GM12878 (cell line): ENCODE measurements at regions of chr12 and their contacts with region 1.

Region 1: GRCh38 chr12:11758510-11759493 is 109.3 kb downstream of the ETV6 start:
- DNase-seq: peak; percentile 93
- ATAC-seq: peak; percentile 76
- H3K4me3 ChIP-seq: no peak overlapping the region; the same call in 1 of the 2 replicates
- H3K27ac ChIP-seq: peak overlapping the region; percentile 100
- H3K4me1 ChIP-seq: peaks cover 70% of the 10 kb centered on the region
- H3K27me3 ChIP-seq: no peaks in the 10 kb centered on the region
- CTCF ChIP-seq: no peak
- EP300 ChIP-seq: peak; percentile 78 to 91; a peak in 1 of 4 replicates
- POLR2A ChIP-seq: peak; percentile 63
- RAD21 ChIP-seq: peak; percentile 17; the same call in 1 of the 2 replicates

Region 2: DNA sequence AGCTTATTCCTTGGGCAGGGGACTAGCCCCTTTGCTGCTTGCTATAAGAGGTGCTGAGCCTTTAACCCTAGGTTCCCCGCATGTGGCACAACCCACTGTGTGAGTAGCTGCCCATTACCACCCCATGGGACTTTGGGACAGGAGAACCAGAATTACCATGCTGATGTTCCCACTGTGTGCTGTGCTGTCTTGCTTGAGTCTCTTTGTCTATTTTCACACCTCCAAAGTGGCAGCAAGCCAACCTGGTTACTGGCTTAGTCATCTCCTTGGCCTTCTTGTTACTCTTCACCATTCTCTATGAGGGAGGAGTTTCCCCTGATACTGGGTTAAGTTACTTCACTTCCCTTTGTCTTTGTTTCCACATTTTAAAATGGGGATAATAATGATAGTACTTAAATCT is 182.7 kb before region 1 on chr12:
- CTCF ChIA-PET with region 1: interaction called, 4 read pairs
- POLR2A ChIA-PET with region 1: interaction called, 6 read pairs
- RAD21 ChIA-PET with region 1: interaction called, 28 read pairs
- SMC1A ChIA-PET with region 1: interaction called, 70 read pairs
- in situ Hi-C with region 1: loop called (anchors 5 kb)
- intact Hi-C with region 1: no loop called
- DNase-seq: peak; percentile 86
- ATAC-seq: peak; percentile 53
- H3K4me3 ChIP-seq: no peak overlapping the region
- H3K27ac ChIP-seq: peak overlapping the region; percentile 89
- H3K4me1 ChIP-seq: peaks cover 43% of the 10 kb centered on the region
- H3K27me3 ChIP-seq: no peaks in the 10 kb centered on the region
- CTCF ChIP-seq: no peak
- EP300 ChIP-seq: no peak
- POLR2A ChIP-seq: no peak
- RAD21 ChIP-seq: no peak

Region 3: GRCh38 chr12:11719678-11720099 is 39.1 kb before region 1 on chr12:
- CTCF ChIA-PET with region 1: interaction called, 8 read pairs
- POLR2A ChIA-PET with region 1: interaction called, 5 read pairs
- RAD21 ChIA-PET with region 1: interaction called, 497 read pairs
- SMC1A ChIA-PET with region 1: interaction called, 433 read pairs
- in situ Hi-C with region 1: no loop called
- intact Hi-C with region 1: no loop called
- DNase-seq: no peak
- ATAC-seq: peak; percentile 12
- H3K4me3 ChIP-seq: no peak overlapping the region
- H3K27ac ChIP-seq: peak overlapping the region; percentile 83
- H3K4me1 ChIP-seq: peaks cover 78% of the 10 kb centered on the region
- H3K27me3 ChIP-seq: no peaks in the 10 kb centered on the region
- CTCF ChIP-seq: no peak
- EP300 ChIP-seq: no peak
- POLR2A ChIP-seq: peak; percentile 53; the same call in 1 of the 2 replicates
- RAD21 ChIP-seq: no peak

Region 4: GRCh38 chr12:11771356-11771755 is 12.6 kb after region 1 on chr12:
- CTCF ChIA-PET with region 1: interaction called, 14 read pairs
- POLR2A ChIA-PET with region 1: interaction called, 144 read pairs
- RAD21 ChIA-PET with region 1: interaction called, 399 read pairs
- SMC1A ChIA-PET with region 1: interaction called, 1,116 read pairs
- in situ Hi-C with region 1: no loop called
- intact Hi-C with region 1: no loop called
- DNase-seq: no peak
- ATAC-seq: peak; percentile 68
- H3K4me3 ChIP-seq: no peak overlapping the region
- H3K27ac ChIP-seq: peak overlapping the region; percentile 72
- H3K4me1 ChIP-seq: peaks cover 79% of the 10 kb centered on the region
- H3K27me3 ChIP-seq: no peaks in the 10 kb centered on the region
- CTCF ChIP-seq: no peak
- EP300 ChIP-seq: peak in 1 of 2 experiments; percentile 55; a peak in 1 of 4 replicates
- POLR2A ChIP-seq: no peak
- RAD21 ChIP-seq: no peak

Region 5: GRCh38 chr12:11827091-11828061 is 68.6 kb after region 1 on chr12:
- CTCF ChIA-PET with region 1: no interaction called
- POLR2A ChIA-PET with region 1: interaction called, 10 read pairs
- RAD21 ChIA-PET with region 1: interaction called, 86 read pairs
- SMC1A ChIA-PET with region 1: interaction called, 140 read pairs
- in situ Hi-C with region 1: no loop called
- intact Hi-C with region 1: no loop called
- DNase-seq: no peak
- ATAC-seq: no peak
- H3K4me3 ChIP-seq: no peak overlapping the region
- H3K27ac ChIP-seq: 0 out of 2 replicates have a peak overlapping the region, but pooled peaks have one; percentile 6
- H3K4me1 ChIP-seq: peaks cover 64% of the 10 kb centered on the region
- H3K27me3 ChIP-seq: no peaks in the 10 kb centered on the region
- CTCF ChIP-seq: no peak
- EP300 ChIP-seq: no peak
- POLR2A ChIP-seq: no peak
- RAD21 ChIP-seq: no peak

Region 6: GRCh38 chr12:11869941-11870540 is 111.2 kb after region 1 on chr12:
- CTCF ChIA-PET with region 1: no interaction called
- POLR2A ChIA-PET with region 1: no interaction called
- RAD21 ChIA-PET with region 1: no interaction called
- SMC1A ChIA-PET with region 1: no interaction called
- in situ Hi-C with region 1: no loop called
- intact Hi-C with region 1: no loop called
- DNase-seq: no peak
- ATAC-seq: no peak
- H3K4me3 ChIP-seq: no peak overlapping the region
- H3K27ac ChIP-seq: no peak overlapping the region
- H3K4me1 ChIP-seq: peaks cover 1% of the 10 kb centered on the region
- H3K27me3 ChIP-seq: no peaks in the 10 kb centered on the region
- CTCF ChIP-seq: no peak
- EP300 ChIP-seq: no peak
- POLR2A ChIP-seq: no peak
- RAD21 ChIP-seq: no peak

Region 7: DNA sequence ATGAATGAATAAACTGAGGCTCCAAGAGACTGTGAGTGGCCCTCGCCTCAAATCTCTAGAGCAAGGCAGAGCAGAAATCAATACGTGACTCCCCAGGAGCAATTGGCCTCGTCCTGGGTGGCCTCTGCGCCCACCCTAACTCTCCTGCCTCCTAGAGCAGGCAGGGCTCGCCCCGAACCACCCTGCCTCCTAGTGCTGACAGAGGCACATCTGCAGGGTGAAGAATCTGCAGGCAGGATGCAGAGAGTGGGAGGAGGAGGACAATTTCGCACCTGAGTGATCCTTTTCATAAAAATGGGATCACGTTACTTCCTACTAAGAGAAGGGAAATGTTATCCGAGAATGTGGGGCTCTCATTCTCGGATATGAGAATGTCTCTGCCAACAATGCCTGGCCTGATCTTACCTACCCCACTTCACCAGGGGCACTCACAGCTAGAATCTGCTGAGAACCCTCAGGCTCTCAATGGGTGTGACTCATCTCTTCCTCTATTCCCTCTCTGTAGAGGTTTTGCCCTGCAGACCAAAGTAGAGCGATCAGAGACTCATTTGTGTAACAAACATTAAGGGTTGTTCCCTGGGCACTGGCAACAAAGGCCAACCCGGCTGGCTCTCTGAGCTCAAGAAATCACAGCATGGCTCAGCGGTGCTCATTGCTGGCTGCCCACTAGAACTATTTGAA is 250.3 kb after region 1 on chr12:
- CTCF ChIA-PET with region 1: interaction called, 10 read pairs
- POLR2A ChIA-PET with region 1: no interaction called
- RAD21 ChIA-PET with region 1: interaction called, 23 read pairs
- SMC1A ChIA-PET with region 1: interaction called, 44 read pairs
- in situ Hi-C with region 1: no loop called
- intact Hi-C with region 1: loop called (anchors 2 kb)
- DNase-seq: peak; percentile 86
- ATAC-seq: peak; percentile 63
- H3K4me3 ChIP-seq: no peak overlapping the region
- H3K27ac ChIP-seq: peak overlapping the region; percentile 90
- H3K4me1 ChIP-seq: peaks cover 57% of the 10 kb centered on the region
- H3K27me3 ChIP-seq: no peaks in the 10 kb centered on the region
- CTCF ChIP-seq: peak; percentile 33 to 45 (median 41); a peak in 5 of 6 replicates
- EP300 ChIP-seq: no peak; a peak in 1 of 4 replicates
- POLR2A ChIP-seq: no peak
- RAD21 ChIP-seq: peak; percentile 71